Activated T-helper 1 cell treated with anti-CD3 and anti-CD28 coated beads, Interleukin-12 subunit alpha, Interleukin-12 subunit beta, Interleukin-2, Interleukin-4 antibody, amounts not matched to agents 30 ng/mL and 10 ng/mL and 1 ng/mL, durations not matched to agents 14 hours and 24 hours and 36 hours (primary cell): ENCODE measurements at regions of chr5 and their contacts with region 1.

Region 1: GRCh38 chr5:157540707-157541446 is 34.7 kb downstream of the ADAM19 start:
- DNase-seq: peak; percentile 55
- H3K4me3 Mint-ChIP-seq: peak overlapping the region; percentile 63
- H3K27ac Mint-ChIP-seq: peak overlapping the region; percentile 93
- H3K4me1 Mint-ChIP-seq: peaks cover 90% of the 10 kb centered on the region
- H3K27me3 Mint-ChIP-seq: no peaks in the 10 kb centered on the region

Region 2: GRCh38 chr5:157271740-157272271 is 269.1 kb before region 1 on chr5:
- intact Hi-C with region 1: loop called (anchors 5 kb)
- DNase-seq: peak; percentile 85
- H3K4me3 Mint-ChIP-seq: peak overlapping the region; percentile 74
- H3K27ac Mint-ChIP-seq: peak overlapping the region; percentile 100
- H3K4me1 Mint-ChIP-seq: peaks cover 96% of the 10 kb centered on the region
- H3K27me3 Mint-ChIP-seq: no peaks in the 10 kb centered on the region

Region 3: GRCh38 chr5:157520911-157521703 is 19.8 kb before region 1 on chr5:
- intact Hi-C with region 1: loop called (anchors 1 kb)
- DNase-seq: no peak
- H3K4me3 Mint-ChIP-seq: no peak overlapping the region
- H3K27ac Mint-ChIP-seq: peak overlapping the region; percentile 73
- H3K4me1 Mint-ChIP-seq: peaks cover 86% of the 10 kb centered on the region
- H3K27me3 Mint-ChIP-seq: no peaks in the 10 kb centered on the region

Region 4: GRCh38 chr5:157596487-157596886 is 55.6 kb after region 1 on chr5:
- intact Hi-C with region 1: loop called (anchors 1 kb)
- DNase-seq: peak; percentile 51
- H3K4me3 Mint-ChIP-seq: peak overlapping the region; percentile 46
- H3K27ac Mint-ChIP-seq: peak overlapping the region; percentile 75
- H3K4me1 Mint-ChIP-seq: peaks cover 91% of the 10 kb centered on the region
- H3K27me3 Mint-ChIP-seq: no peaks in the 10 kb centered on the region

Region 5: GRCh38 chr5:157718519-157718918 is 177.6 kb after region 1 on chr5:
- intact Hi-C with region 1: loop called (anchors 1 kb)
- DNase-seq: no peak
- H3K4me3 Mint-ChIP-seq: peak overlapping the region; percentile 45
- H3K27ac Mint-ChIP-seq: peak overlapping the region; percentile 59
- H3K4me1 Mint-ChIP-seq: peaks cover 45% of the 10 kb centered on the region
- H3K27me3 Mint-ChIP-seq: no peaks in the 10 kb centered on the region